K562 (cell line): ENCODE measurements at regions of chr1 and their contacts with region 1.

Region 1: DNA sequence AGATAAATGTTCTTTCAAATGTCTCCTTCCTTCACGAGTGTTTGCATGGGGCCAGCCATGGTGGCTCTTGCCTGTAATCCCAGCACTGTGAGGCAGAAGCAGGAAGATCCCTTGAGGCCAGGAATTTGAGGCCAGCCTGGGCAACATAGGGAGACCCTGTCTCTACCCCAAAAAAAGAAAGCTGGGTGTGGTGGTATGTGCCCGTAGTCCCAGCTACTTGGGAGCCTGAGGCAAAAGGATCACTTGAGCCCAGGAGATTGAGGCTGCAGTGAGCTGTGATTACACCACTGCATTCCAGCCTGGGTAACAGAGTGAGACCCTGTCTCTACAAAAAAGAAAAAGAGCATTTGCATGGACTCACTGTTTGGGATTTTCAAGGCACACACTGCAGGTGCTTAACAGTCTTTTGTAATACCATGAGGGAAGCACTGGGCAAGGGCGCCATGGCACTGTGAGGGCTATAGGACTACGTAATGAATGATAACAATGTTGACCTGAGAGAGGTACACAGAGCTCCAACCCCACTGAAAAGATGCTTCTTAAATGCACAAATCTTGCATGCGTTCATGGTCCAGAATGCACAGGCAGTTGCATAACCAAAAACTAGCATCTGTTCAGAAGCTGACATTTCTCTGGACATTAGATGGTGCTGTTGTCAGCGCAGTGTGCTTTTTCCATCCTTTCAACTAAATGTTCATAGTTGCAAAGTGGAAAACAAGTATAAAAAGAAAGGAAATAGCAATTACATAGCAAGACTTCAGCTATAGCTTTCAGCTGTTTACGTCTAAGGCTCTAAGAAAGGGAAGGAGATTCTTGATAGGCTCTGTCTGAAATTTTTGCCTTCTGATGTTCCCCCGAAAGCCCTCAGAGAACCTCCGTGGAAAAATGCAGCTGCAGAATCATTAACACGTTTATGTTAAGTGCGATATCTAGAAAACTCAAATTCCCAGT is 7.8 kb upstream of the TARBP1 start:
- DNase-seq: peak in 2 of 4 experiments; percentile 45 to 64
- ATAC-seq: peak; percentile 83
- H3K4me3 ChIP-seq: no peak overlapping the region
- H3K27ac ChIP-seq: no peak overlapping the region
- H3K4me1 ChIP-seq: peaks cover 0 to 15% of the 10 kb centered on the region in 2 experiments; a peak in 3 of 5 replicates
- H3K27me3 ChIP-seq: peaks cover 0 to 7% of the 10 kb centered on the region in 2 experiments; a peak in 1 of 5 replicates
- CTCF ChIP-seq: peak; percentile 67 to 84 (median 77)
- EP300 ChIP-seq: no peak
- POLR2A ChIP-seq: no peak
- RAD21 ChIP-seq: peak; percentile 89 to 95

Region 2: GRCh38 chr1:235720544-235720943 is 1233.8 kb after region 1 on chr1:
- CTCF ChIA-PET with region 1: no interaction called
- POLR2A ChIA-PET with region 1: no interaction called
- in situ Hi-C with region 1: no loop called
- intact Hi-C with region 1: loop called (anchors 5 kb)
- DNase-seq: no peak
- ATAC-seq: no peak
- H3K4me3 ChIP-seq: no peak overlapping the region
- H3K27ac ChIP-seq: no peak overlapping the region
- H3K4me1 ChIP-seq: no peaks in the 10 kb centered on the region
- H3K27me3 ChIP-seq: peaks cover 0 to 6% of the 10 kb centered on the region in 2 experiments; a peak in 2 of 5 replicates
- CTCF ChIP-seq: no peak
- EP300 ChIP-seq: no peak
- POLR2A ChIP-seq: no peak
- RAD21 ChIP-seq: no peak